ENCODE measurements at regions of chr5 and their contacts with region 1.

Region 1: GRCh38 chr5:91419571-91420537 is 36.7 kb upstream of the ARRDC3 start:
- DNase-seq: peak; percentile 88
- H3K4me3 Mint-ChIP-seq: no peak overlapping the region
- H3K27ac Mint-ChIP-seq: no peak overlapping the region
- H3K4me1 Mint-ChIP-seq: no peaks in the 10 kb centered on the region
- H3K27me3 Mint-ChIP-seq: peaks cover 6% of the 10 kb centered on the region

Region 2: DNA sequence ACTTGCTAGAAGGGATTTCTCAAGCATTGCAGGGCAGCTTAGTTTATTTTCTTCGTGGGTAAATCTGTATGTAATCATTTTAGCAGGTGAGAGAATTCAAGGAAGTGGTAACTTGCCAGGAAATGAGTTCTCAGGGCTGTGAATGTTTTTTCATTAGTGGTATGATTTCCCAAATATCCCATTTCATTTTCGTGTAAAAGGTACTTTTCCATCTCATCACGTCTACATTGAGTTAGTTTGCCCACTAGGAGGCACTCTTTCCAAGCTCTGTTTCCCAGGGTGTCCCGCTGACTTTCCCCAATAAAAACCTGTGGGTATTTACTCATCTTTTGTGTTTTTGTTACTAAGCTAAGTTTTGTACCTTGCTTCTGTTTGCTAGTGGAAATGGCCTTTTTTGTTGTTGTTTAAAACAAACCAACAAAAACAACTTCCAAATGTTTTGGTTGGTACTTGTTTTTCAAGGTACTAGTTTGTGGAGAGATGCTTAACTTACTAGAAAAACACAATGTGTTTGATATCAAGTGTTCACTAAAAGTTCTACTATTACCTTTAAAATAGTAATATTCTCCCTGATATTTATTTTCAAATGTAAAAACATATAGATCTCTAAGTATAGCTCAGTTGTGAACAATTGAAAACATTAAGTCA is 487.7 kb before region 1 on chr5:
- intact Hi-C with region 1: loop called (anchors 1 kb)
- DNase-seq: peak; percentile 78
- H3K4me3 Mint-ChIP-seq: no peak overlapping the region
- H3K27ac Mint-ChIP-seq: no peak overlapping the region
- H3K4me1 Mint-ChIP-seq: peaks cover 4% of the 10 kb centered on the region
- H3K27me3 Mint-ChIP-seq: no peaks in the 10 kb centered on the region

Region 3: DNA sequence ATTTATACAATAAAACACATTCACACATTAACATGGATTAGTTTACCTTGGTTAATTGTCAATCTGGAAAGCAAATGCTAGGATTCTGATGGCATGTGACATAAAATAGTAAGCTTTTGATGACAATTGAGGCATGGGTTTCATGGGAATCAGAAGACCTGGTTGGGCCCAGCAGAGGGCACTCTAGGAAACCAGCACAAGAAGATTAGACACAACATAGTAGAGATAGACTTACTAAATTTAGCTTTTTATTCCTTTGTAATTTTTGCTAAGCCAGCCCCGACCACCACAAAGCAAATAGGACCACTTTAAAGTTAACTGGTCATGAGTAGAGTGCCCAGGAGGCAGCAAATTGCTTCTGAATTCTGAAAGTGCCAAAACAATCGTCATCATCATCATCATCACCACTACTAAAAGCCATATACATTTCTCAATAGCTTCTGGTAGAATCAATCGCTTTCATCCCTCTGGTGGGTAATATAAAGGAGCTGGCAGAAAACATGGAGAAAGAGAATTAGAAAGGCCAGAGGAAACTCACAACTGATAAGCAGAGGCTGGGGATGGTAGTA is 200.0 kb before region 1 on chr5:
- intact Hi-C with region 1: loop called (anchors 1 kb)
- DNase-seq: peak; percentile 69
- H3K4me3 Mint-ChIP-seq: no peak overlapping the region
- H3K27ac Mint-ChIP-seq: no peak overlapping the region
- H3K4me1 Mint-ChIP-seq: peaks cover 2% of the 10 kb centered on the region
- H3K27me3 Mint-ChIP-seq: peaks cover 18% of the 10 kb centered on the region

Measured in activated CD4-positive, alpha-beta T cell treated with anti-CD3 and anti-CD28 coated beads, Interleukin-2, amount 10 ng/mL, durations not matched to agents 24 days and 14 days (primary cell).